Left ventricle myocardium inferior (tissue), 1 donor: ENCODE measurements at regions of chr20 and their contacts with region 1.

Region 1: GRCh38 chr20:9978397-9979004 is 56.3 kb upstream of the ANKEF1 start:
- DNase-seq: no peak
- H3K4me3 ChIP-seq: no peak overlapping the region
- H3K27ac ChIP-seq: no peak overlapping the region
- H3K4me1 ChIP-seq: no peaks in the 10 kb centered on the region
- H3K27me3 ChIP-seq: peaks cover 12% of the 10 kb centered on the region
- CTCF ChIP-seq: peak; percentile 79

Region 2: GRCh38 chr20:10427060-10427692 is 448.7 kb after region 1 on chr20:
- intact Hi-C with region 1: loop called (anchors 2 kb)
- DNase-seq: peak; percentile 49
- H3K4me3 ChIP-seq: no peak overlapping the region
- H3K27ac ChIP-seq: no peak overlapping the region
- H3K4me1 ChIP-seq: peaks cover 68% of the 10 kb centered on the region
- H3K27me3 ChIP-seq: no peaks in the 10 kb centered on the region
- CTCF ChIP-seq: peak; percentile 82